ENCODE measurements at regions of chr2 and their contacts with region 1.

Region 1: DNA sequence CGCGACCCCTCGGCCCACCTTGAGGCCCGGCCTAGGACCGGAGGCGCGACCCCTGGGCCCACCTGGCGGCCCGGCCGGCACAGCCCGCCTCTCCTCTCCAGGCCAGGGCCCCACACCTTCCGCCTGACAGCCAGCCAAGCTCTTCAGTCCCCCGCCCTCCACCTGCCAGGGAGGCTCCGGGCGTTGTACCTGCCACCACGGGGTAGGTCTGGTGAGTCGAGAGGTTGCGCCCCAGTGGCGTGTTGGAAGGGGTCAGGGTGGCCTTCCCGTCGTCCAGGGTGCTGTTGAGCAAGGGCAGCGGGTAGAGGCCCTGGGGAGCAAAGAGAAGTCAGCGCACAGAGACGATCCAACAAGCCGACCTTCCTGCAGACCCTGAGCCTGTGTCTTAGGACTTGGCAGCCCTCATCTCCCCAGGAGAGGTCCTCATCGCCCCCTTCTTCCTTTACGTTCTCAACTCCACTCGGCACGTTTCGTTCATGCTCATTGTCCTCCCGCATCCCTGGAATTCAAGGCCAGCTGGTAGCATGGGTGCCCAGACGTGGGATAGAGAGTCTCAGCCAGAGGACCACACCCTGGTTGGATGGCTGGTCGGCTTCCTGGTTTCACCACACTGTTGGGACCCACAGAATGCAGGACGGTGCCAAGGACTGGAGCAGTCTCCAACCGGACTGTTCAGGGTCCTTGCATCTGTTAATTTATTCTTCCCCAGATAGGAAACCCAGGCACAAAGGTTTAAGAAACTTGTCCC is 42.1 kb downstream of the PAX8 start:
- DNase-seq: no peak
- ATAC-seq: no peak
- H3K4me3 ChIP-seq: no peak overlapping the region
- H3K27ac ChIP-seq: no peak overlapping the region
- H3K4me1 ChIP-seq: peaks cover 20% of the 10 kb centered on the region
- H3K27me3 ChIP-seq: no peaks in the 10 kb centered on the region
- CTCF ChIP-seq: no peak

Region 2: DNA sequence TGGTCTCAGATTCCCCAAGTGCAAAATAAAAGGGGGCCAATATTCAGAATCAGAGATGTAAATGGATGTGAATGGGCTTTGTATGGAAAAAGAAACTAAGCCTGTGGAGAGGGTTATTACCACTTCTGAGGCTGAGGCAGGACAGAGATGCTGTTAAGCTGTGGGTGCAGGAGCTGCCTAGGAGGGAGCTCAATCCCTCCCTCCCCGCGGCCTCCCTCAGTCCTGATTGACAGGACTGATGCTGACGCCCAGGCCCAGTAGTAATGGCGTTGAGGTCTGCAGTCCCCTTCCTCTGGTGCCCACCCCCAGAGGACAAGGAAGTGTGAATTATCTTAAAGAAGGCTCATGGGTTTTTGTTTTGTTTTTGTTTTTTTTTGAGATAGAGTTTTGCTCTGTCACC is 22.4 kb before region 1 on chr2:
- intact Hi-C with region 1: loop called in 1 of 2 experiments (anchors 2 kb)
- DNase-seq: no peak
- ATAC-seq: no peak
- H3K4me3 ChIP-seq: no peak overlapping the region
- H3K27ac ChIP-seq: no peak overlapping the region
- H3K4me1 ChIP-seq: peaks cover 1% of the 10 kb centered on the region
- H3K27me3 ChIP-seq: no peaks in the 10 kb centered on the region
- CTCF ChIP-seq: no peak